ENCODE measurements at regions of chr3 and their contacts with region 1.

Region 1: DNA sequence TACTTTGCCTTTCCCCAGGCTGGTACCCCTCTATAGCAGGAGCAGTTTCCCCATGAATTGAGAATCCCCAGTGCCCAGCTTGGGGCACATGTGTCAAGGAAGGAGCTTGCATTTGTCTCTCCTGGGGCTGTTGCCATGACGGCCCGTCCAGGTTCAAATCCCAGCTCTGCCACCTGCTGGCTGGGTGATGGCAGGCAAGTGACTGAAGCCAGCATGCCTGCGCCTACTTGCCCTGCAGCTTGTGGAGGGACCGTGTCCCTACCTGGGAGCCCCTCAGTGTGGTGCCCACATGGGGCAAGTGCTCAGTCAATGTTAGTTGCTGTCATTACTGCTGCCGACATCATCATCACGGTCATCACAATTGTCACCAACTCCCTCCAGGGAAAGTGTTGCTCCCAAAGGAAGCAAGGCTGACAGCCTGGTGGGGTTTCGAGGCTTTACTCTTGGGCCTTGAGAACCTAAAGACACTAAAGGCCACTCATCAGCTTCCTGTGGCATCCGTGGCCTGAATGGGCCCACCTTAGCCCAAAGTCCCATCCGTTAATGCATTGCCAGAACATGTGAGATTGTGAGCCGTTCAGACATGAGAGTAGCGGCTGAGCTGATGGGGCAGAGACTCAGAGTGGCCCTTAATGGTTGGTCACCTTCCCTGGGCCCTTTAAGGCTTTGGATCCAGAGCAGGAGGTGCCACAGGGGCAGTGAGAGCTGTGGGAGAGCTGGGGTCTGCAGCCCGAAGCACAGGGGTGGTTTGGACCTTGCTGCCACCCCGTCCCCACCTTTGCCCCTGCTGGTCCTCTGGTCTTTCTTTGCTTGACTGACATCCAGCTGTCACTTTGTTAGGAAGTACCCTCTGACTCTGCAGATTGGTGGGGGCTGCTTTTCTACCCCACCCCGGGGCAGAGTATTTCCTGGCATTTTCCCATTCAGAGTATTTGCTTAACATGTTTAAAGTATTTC is 144.3 kb downstream of the DNAJB8 start:
- DNase-seq: peak; percentile 63

Region 2: GRCh38 chr3:128153156-128154041 is 168.9 kb before region 1 on chr3 and contains the start of gene EEFSEC:
- in situ Hi-C with region 1: loop called (anchors 25 kb)
- DNase-seq: peak; percentile 77
- total RNA-seq, gene EEFSEC: 2.4 and 3.8 TPM in 2 replicates

Measured in SK-MEL-5 (cell line).